ENCODE measurements at regions of chr19 and their contacts with region 1.

Region 1: DNA sequence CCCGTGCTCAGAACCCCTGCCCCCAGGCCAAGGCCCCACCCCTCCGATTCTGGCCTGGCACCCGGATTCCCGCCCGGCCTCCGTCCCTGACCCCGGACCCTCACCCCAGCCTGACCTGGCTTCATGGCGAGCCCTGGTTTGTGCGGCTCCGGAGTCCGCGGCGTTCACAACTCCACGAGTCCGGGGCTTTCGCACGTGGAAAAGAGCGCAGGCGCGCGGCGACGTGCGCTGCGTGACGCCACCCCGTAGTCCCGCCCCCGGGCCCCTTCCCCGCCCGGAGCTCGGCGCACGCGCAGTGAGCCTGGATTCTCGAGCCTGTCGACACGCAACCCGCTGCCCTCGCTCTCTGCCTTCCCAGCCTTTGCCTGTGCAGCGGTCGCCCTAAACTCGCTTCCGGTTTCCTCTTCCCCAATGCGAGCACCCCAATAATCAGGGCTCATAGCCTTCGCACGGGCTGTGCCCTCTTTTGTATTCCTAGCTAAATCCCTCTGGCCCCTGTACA is at the start of gene FBL:
- DNase-seq: peak; percentile 98
- H3K4me3 ChIP-seq: peak within 1 kb of the TSS; percentile 69 to 81 (median 76)
- H3K27ac ChIP-seq: peak within 1 kb of the TSS; percentile 78 to 88 (median 86)
- H3K4me1 ChIP-seq: peaks cover 22 to 55% (median 50%) of the 10 kb centered on the region in 4 donors
- H3K27me3 ChIP-seq: no peaks in the 10 kb centered on the region
- CTCF ChIP-seq: peak in 1 of 3 experiments; percentile 13
- EP300 ChIP-seq: no peak
- POLR2A ChIP-seq: no peak
- total RNA-seq, gene FBL: 90.6 to 142 (median 96.7) TPM

Region 2: DNA sequence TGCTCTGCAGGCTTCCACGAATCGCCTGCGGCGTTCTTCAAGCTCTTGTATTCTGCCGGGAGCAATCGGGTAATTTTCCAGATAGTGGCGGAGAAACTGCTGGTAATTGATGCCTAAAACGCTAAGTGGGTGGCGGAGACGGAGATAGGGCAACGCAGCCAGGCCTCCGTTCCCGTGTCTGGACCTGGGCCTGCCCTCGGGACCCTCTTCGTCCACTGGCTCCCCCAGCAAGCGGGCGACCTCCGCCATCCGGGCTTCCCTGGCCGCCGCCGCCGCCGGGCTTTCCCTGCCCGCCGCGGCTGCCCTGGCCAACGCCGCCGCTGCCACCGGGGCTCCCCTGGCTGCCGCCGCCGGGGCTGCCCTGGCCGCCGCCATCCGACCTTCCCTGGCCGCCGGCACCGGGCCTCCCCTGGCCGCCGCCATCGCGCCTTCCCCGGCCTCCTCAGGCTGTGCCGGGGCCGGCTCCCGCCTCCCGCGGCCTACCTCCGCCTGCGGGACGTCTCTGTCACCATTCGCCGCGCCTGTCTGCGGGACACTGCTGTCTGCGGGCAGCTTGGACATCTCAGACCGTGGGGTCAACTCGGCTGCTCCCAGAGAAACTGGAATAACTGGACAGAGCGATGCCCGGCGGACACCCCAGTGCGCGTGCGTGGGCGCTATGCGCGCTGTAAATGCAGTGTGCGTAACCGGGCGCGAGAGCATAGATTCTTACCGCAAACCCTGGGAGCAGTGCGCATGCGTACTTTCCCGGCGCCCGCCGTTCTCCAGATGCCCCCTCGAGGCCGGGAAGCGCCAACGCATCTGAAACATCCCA is 306.5 kb before region 1 on chr19 and contains the start of gene EID2:
- intact Hi-C with region 1: loop called (anchors 10 kb)
- DNase-seq: peak; percentile 98
- H3K4me3 ChIP-seq: peak within 1 kb of the TSS; percentile 75 to 98 (median 82)
- H3K27ac ChIP-seq: peak within 1 kb of the TSS; percentile 94 to 98 (median 96)
- H3K4me1 ChIP-seq: peaks cover 15 to 31% (median 28%) of the 10 kb centered on the region in 4 donors
- H3K27me3 ChIP-seq: peaks cover 0 to 4% (median 0%) of the 10 kb centered on the region in 4 donors
- CTCF ChIP-seq: peak; percentile 88 to 96 (median 89)
- EP300 ChIP-seq: no peak
- POLR2A ChIP-seq: peak; percentile 73
- total RNA-seq, gene EID2: 13.9 to 26.4 (median 18.9) TPM

Measured in esophagus muscularis mucosa (tissue), 4 donors.